ENCODE measurements at regions of chr1 and their contacts with region 1.

Region 1: GRCh38 chr1:119008483-119009311 is 20.6 kb upstream of the TBX15 start:
- DNase-seq: no peak
- H3K4me3 ChIP-seq: 0 out of 2 replicates have a peak overlapping the region, but pooled peaks have one; percentile 4
- H3K27me3 ChIP-seq: peaks cover 3% of the 10 kb centered on the region; the same call in 1 of the 2 replicates
- CTCF ChIP-seq: peak; percentile 47

Region 2: DNA sequence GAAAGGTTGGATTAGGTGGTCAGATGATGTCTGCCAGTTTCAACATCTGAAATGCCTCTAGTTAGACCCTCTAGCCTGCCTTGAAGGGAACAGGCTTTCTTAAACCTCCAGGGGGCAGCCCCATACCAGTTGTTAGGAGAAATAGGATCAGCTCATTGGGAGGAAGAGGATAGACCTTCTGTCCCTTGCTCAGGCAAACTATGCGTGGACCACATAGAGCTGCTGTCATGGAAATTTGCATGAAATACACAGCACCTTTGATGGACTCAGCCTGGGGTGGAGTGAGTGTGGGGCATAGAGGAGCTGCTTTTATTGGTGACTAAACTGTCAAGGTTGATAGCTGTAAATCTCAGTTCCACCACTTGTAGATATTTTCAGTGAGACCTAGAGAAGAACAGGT is 785.3 kb before region 1 on chr1:
- CTCF ChIA-PET with region 1: interaction called, 10 read pairs
- POLR2A ChIA-PET with region 1: no interaction called
- DNase-seq: no peak
- H3K4me3 ChIP-seq: no peak overlapping the region
- H3K27me3 ChIP-seq: no peaks in the 10 kb centered on the region
- CTCF ChIP-seq: peak; percentile 47

Region 3: DNA sequence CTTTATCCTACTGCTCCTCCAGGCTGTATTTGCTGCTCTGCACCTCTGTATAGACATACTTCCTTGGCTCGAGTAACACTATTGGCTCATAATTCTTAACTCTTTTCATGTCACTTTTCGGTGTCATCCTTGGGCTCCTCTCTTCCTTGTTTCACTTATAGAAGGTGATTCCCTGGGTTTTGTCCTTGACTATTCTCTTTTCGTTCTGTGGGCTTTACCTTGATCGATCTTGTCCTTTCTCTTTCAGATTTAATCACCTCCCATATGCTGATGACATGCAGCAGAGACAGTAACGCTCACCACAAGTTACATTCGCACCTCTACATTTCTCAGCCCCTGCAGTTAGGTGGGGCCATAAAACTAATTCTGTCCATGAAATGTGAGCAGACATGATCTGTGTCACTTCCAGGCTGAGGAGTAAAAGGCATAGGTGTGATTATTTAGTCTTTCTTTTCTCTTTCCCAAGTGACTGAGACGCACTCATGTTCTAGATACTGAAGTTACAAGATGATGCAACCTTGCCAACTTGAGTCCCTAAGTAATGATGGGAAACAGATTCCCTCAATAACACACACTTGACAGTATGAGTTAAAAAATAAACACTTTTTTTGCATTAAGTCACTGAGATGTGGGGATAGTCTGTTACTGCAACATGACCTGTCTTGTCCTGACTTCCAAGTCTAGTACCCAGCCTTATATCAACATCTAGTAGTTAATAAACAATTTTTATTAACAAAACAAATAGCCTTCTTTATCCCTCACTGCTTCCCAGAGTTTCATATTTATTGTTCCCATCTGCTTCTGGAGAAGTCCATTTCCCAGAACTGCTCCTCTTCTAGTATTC is 310.0 kb after region 1 on chr1:
- CTCF ChIA-PET with region 1: no interaction called
- POLR2A ChIA-PET with region 1: no interaction called
- DNase-seq: no peak
- H3K4me3 ChIP-seq: no peak overlapping the region
- H3K27me3 ChIP-seq: peaks cover 2% of the 10 kb centered on the region; the same call in 1 of the 2 replicates
- CTCF ChIP-seq: no peak